ENCODE measurements at regions of chr13 and their contacts with region 1.

Region 1: DNA sequence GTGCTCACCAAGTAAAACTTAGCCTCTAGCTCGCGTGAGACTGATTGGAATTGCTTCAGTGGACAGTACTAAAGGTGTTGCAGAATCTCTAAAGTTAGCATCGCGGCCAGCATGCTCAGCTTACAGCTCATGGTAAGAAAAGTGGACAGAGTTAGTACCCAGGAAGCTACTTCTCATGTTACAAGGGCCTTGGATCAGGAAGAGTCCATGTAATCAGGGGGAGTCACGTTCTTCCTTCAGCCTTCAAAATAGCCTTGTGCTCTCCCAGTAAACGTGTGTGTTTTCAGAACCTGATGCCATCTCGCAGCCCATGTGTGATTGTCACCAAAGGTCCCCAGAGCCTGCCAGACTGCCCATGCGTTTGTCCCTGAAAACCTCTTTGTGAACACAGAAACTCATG is 195.8 kb upstream of the RNF113B start:
- DNase-seq: peak; percentile 28
- H3K4me3 ChIP-seq: no peak overlapping the region
- H3K27me3 ChIP-seq: no peaks in the 10 kb centered on the region
- CTCF ChIP-seq: no peak

Region 2: GRCh38 chr13:98360545-98360944 is 12.3 kb before region 1 on chr13:
- CTCF ChIA-PET with region 1: no interaction called
- POLR2A ChIA-PET with region 1: no interaction called
- DNase-seq: no peak
- H3K4me3 ChIP-seq: no peak overlapping the region
- H3K27me3 ChIP-seq: no peaks in the 10 kb centered on the region
- CTCF ChIP-seq: no peak

Region 3: DNA sequence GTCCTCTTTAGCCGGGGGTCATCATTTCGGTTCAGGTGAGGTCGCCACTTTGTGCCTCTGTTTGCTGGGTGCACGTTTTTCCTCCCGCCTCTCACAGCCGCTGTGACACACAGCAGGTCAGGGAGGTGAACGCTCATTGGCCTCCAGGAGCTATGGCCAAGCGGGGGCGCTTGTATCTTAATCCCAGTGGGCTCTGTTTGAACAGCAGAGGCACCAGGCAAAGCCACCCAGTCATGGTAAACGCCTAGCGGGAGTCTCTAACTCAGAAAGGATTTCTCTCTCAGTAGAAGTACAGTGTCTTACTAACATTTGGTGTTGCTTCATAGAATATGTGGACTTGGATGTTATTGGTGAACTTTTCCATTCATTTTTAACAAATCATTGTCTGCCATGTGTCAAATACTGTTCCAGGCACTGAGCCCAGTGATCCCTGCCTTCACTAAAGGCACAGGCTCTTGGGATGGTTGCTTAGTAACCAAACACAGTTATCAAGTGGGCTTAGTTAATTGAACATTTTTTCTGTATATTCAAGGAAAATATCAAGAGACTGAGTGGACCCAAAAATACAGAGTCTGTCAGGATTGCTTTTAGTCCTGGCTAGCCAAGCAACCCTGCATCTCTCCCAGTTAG is 17.3 kb after region 1 on chr13:
- CTCF ChIA-PET with region 1: no interaction called
- POLR2A ChIA-PET with region 1: no interaction called
- DNase-seq: no peak
- H3K4me3 ChIP-seq: no peak overlapping the region
- H3K27me3 ChIP-seq: no peaks in the 10 kb centered on the region
- CTCF ChIP-seq: no peak

Region 4: GRCh38 chr13:98405107-98405571 is 32.3 kb after region 1 on chr13:
- CTCF ChIA-PET with region 1: interaction called, 4 read pairs
- POLR2A ChIA-PET with region 1: interaction called, 16 read pairs
- DNase-seq: no peak
- H3K4me3 ChIP-seq: no peak overlapping the region
- H3K27me3 ChIP-seq: no peaks in the 10 kb centered on the region
- CTCF ChIP-seq: no peak

Region 5: GRCh38 chr13:98542568-98543377 is 169.9 kb after region 1 on chr13:
- CTCF ChIA-PET with region 1: no interaction called
- POLR2A ChIA-PET with region 1: no interaction called
- DNase-seq: no peak
- H3K4me3 ChIP-seq: no peak overlapping the region
- H3K27me3 ChIP-seq: no peaks in the 10 kb centered on the region
- CTCF ChIP-seq: no peak

Measured in BJ (cell line).